ENCODE measurements at regions of chr20 and their contacts with region 1.

Region 1: GRCh38 chr20:7935027-7935551 is 5.2 kb downstream of the HAO1 start:
- DNase-seq: no peak
- H3K4me3 ChIP-seq: no peak overlapping the region
- H3K27ac ChIP-seq: no peak overlapping the region
- H3K27me3 ChIP-seq: peaks cover 3% of the 10 kb centered on the region
- CTCF ChIP-seq: no peak

Region 2: GRCh38 chr20:7744411-7744810 is 190.7 kb before region 1 on chr20:
- CTCF ChIA-PET with region 1: no interaction called
- POLR2A ChIA-PET with region 1: no interaction called
- DNase-seq: peak; percentile 41
- H3K4me3 ChIP-seq: no peak overlapping the region
- H3K27ac ChIP-seq: peak overlapping the region; percentile 68
- H3K27me3 ChIP-seq: no peaks in the 10 kb centered on the region
- CTCF ChIP-seq: no peak

Region 3: DNA sequence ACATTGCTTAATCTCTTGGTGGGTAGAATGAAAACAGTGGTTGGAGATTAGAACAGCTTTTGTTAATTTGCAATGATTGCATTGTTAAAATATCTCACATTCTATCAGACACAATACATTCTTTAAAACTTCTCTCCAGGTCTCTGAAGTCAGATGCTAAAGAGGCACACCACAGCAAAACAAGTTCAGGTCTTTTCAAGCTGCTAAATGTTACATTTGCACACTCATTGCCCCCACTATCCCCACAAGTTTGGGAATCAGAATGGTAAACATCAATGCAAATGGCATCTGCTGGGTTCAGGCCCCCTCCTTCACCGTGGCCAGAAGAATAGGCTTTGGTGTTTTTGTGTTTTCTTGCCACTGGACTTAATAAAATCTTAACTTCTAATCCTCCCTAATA is 15.3 kb after region 1 on chr20:
- CTCF ChIA-PET with region 1: interaction called, 14 read pairs
- POLR2A ChIA-PET with region 1: interaction called, 4 read pairs
- DNase-seq: no peak
- H3K4me3 ChIP-seq: no peak overlapping the region
- H3K27ac ChIP-seq: no peak overlapping the region
- H3K27me3 ChIP-seq: no peaks in the 10 kb centered on the region
- CTCF ChIP-seq: no peak

Region 4: DNA sequence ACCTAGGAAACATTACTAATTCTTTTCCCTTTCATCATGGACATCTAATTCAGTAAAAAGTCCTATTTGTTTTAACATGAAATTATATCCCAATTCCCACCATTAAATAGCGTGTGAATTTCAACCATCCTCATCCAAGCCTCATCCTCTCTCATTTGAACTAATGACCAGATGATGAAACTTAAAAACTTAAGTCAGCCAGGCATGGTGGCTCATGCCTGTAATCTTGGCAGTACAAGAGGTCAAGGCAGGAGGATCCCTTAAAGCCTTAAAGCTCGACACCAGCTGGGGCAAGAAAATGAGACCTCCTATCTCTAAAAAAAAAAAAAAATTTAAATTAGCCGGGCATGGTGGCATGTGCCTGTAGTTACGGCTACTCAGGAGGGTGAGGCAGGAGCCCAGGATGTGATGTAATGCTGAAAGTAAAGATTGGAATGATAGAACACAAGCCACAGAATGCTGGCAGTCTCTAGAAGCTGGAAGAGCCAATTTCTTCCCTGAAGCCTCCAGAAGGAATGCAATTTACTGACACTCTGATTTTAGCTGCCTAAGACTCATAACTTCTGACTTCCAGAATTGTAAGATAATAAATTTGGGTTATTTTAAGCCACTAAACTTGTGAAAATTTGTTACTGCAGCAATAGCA is 32.2 kb after region 1 on chr20:
- CTCF ChIA-PET with region 1: interaction called, 12 read pairs
- POLR2A ChIA-PET with region 1: no interaction called
- DNase-seq: no peak
- H3K4me3 ChIP-seq: no peak overlapping the region
- H3K27ac ChIP-seq: no peak overlapping the region
- H3K27me3 ChIP-seq: peaks cover 3% of the 10 kb centered on the region
- CTCF ChIP-seq: no peak

Region 5: DNA sequence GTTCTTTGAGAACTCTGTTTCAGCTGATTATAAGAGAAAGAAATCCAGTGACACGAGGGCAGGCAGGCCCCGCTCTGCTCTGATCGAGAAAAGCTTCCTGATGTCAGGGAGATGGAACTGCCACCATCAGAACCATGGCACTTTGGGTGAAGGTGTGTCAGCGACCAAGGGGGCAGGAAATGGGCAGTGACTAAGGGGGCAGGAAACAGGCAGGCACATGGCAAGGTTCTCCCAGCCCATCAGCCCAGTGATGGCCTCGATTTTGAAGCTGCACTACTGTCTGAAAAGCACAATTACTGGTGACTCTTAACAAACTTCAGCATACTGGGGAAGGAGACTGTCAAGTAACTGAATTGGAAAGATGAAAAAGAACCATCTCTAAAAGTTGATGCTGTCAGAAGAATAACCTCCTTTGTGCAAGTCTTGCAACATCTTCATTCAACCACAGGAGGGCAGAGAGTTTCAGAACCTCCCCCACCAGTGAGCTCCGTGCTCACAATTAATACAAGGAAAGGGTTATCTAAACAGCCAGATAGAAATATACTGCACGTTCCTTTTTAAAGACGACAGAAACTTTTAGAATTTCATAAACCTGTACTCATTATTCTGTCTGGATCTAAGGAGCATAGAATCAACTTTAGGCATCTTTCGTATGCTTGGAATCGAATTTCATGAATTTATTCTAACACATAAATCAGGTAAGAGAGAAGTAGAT is 45.4 kb after region 1 on chr20:
- CTCF ChIA-PET with region 1: interaction called, 12 read pairs
- POLR2A ChIA-PET with region 1: interaction called, 5 read pairs
- DNase-seq: peak; percentile 24
- H3K4me3 ChIP-seq: no peak overlapping the region
- H3K27ac ChIP-seq: no peak overlapping the region
- H3K27me3 ChIP-seq: no peaks in the 10 kb centered on the region
- CTCF ChIP-seq: peak; percentile 71

Region 6: DNA sequence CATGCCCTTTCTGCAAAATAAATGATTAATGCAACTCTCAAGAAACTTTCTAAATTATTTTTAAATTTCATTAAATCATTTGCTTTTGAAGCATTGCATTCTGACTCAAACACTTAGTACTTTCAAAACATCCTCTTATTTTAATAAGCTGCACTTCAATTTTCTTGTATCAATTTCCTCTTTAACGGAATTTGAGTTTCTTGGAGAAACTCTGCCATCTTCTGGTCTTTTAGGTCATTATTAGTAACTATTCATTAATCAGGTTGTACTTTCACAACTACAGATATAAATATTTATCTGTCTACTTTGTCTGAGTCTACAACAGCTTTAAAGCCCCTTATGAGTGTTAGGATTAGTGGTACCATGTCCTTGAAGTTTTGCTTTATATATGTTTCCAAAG is 54.3 kb after region 1 on chr20:
- CTCF ChIA-PET with region 1: interaction called, 24 read pairs
- POLR2A ChIA-PET with region 1: no interaction called
- DNase-seq: no peak
- H3K4me3 ChIP-seq: no peak overlapping the region
- H3K27ac ChIP-seq: no peak overlapping the region
- H3K27me3 ChIP-seq: no peaks in the 10 kb centered on the region
- CTCF ChIP-seq: no peak

Region 7: DNA sequence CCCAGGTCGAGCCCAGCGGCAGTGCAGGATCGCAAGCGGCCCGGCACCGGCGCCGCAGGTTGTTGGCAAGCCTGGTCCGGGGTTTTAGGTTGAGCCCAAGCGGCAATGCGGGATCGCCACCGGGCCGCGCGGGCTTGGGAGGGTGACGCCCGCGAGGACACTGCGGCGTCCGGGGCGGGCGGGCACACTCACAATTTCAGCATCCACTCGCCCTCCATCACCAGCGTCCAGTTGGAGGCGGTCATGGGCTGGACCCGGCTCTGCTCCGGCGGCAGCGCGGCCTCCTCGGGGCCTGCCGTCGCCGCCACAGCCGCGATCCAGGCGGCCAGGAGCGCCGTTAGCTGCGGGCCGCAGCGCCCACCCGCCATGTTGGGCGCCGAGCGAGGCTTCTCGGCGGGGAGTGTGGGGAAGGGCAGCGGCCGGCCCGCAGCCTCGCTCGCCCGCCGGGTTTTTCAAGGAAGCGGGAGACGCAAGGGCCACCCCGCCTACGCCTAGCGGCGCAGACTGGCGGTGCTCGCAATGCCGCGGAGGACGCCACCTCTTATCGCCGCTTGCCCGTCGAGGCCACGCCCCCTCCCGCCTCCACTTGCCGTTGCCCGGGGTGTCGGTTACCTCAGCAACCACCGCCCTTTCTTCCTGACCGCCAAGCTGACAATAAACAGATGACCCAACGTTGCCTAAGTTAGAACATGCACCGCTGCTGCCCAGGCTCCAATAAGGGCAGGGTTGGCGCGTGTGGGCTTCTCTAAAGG is 84.3 kb after region 1 on chr20 and contains the start of gene TMX4:
- CTCF ChIA-PET with region 1: interaction called, 9 read pairs
- POLR2A ChIA-PET with region 1: interaction called, 10 read pairs
- DNase-seq: peak; percentile 82
- H3K4me3 ChIP-seq: peak within 1 kb of the TSS; percentile 81
- H3K27ac ChIP-seq: peak within 1 kb of the TSS; percentile 12
- H3K27me3 ChIP-seq: no peaks in the 10 kb centered on the region
- CTCF ChIP-seq: peak; percentile 6; the same call in 1 of the 2 replicates
- polyA plus RNA-seq, gene TMX4: 12.8 and 15.6 TPM in 2 replicates